GM12878 (cell line): ENCODE measurements at regions of chr17 and their contacts with region 1.

Region 1: GRCh38 chr17:36534840-36535668 is at the starts of genes MYO19 and PIGW:
- DNase-seq: peak; percentile 66
- ATAC-seq: peak; percentile 91
- H3K4me3 ChIP-seq: peak within 1 kb of the TSS; percentile 81
- H3K27ac ChIP-seq: peak within 1 kb of the TSS; percentile 98
- H3K4me1 ChIP-seq: peaks cover 9% of the 10 kb centered on the region
- H3K27me3 ChIP-seq: no peaks in the 10 kb centered on the region
- CTCF ChIP-seq: peak in 1 of 3 experiments; percentile 22; a peak in 3 of 6 replicates
- EP300 ChIP-seq: no peak
- POLR2A ChIP-seq: peak; percentile 94
- RAD21 ChIP-seq: no peak
- polyA plus RNA-seq, gene MYO19: 11.4 to 12.2 TPM
- polyA plus RNA-seq, gene PIGW: 6.0 to 9.5 TPM

Region 2: GRCh38 chr17:36486204-36487194 is 48.6 kb before region 1 on chr17 and contains the start of gene ZNHIT3:
- CTCF ChIA-PET with region 1: interaction called, 8 read pairs
- POLR2A ChIA-PET with region 1: interaction called, 6 read pairs
- RAD21 ChIA-PET with region 1: interaction called, 4 read pairs
- SMC1A ChIA-PET with region 1: no interaction called
- in situ Hi-C with region 1: no loop called
- intact Hi-C with region 1: loop called (anchors 2 kb)
- DNase-seq: peak; percentile 80
- ATAC-seq: peak; percentile 97
- H3K4me3 ChIP-seq: peak within 1 kb of the TSS; percentile 90
- H3K27ac ChIP-seq: peak within 1 kb of the TSS; percentile 71
- H3K4me1 ChIP-seq: peaks cover 9% of the 10 kb centered on the region
- H3K27me3 ChIP-seq: peaks cover 0 to 4% of the 10 kb centered on the region in 2 experiments; a peak in 1 of 4 replicates
- CTCF ChIP-seq: no peak
- EP300 ChIP-seq: no peak
- POLR2A ChIP-seq: peak; percentile 91
- RAD21 ChIP-seq: no peak
- polyA plus RNA-seq, gene ZNHIT3: 110 to 128 TPM

Region 3: DNA sequence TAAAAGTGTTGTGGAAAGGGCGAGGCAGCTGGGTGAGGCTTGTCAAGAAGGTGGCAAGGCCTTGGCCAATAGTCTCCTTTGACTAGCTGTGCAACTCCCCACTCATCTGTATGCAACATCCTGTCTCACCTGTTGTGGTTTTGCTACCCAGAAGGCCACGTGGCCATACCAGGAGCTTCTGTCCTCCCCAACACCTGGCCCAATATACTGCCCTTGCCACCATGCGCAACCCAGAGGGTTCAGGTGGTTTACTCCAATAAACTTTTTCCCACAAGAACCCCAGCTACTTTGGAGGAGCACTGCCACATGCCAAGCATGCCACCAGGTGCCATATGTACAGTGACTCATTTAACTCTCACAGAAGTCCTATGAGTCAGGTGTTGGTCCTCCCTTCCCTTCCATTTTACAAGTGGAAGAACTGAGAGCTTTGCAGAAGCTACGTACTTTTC is 10.6 kb before region 1 on chr17:
- CTCF ChIA-PET with region 1: interaction called, 15 read pairs
- POLR2A ChIA-PET with region 1: interaction called, 3 read pairs
- RAD21 ChIA-PET with region 1: no interaction called
- SMC1A ChIA-PET with region 1: interaction called, 5 read pairs
- in situ Hi-C with region 1: no loop called
- intact Hi-C with region 1: no loop called
- DNase-seq: no peak
- ATAC-seq: no peak
- H3K4me3 ChIP-seq: no peak overlapping the region
- H3K27ac ChIP-seq: peak overlapping the region; percentile 8; the same call in 1 of the 2 replicates
- H3K4me1 ChIP-seq: no peaks in the 10 kb centered on the region
- H3K27me3 ChIP-seq: no peaks in the 10 kb centered on the region
- CTCF ChIP-seq: no peak
- EP300 ChIP-seq: no peak
- POLR2A ChIP-seq: no peak
- RAD21 ChIP-seq: no peak

Region 4: DNA sequence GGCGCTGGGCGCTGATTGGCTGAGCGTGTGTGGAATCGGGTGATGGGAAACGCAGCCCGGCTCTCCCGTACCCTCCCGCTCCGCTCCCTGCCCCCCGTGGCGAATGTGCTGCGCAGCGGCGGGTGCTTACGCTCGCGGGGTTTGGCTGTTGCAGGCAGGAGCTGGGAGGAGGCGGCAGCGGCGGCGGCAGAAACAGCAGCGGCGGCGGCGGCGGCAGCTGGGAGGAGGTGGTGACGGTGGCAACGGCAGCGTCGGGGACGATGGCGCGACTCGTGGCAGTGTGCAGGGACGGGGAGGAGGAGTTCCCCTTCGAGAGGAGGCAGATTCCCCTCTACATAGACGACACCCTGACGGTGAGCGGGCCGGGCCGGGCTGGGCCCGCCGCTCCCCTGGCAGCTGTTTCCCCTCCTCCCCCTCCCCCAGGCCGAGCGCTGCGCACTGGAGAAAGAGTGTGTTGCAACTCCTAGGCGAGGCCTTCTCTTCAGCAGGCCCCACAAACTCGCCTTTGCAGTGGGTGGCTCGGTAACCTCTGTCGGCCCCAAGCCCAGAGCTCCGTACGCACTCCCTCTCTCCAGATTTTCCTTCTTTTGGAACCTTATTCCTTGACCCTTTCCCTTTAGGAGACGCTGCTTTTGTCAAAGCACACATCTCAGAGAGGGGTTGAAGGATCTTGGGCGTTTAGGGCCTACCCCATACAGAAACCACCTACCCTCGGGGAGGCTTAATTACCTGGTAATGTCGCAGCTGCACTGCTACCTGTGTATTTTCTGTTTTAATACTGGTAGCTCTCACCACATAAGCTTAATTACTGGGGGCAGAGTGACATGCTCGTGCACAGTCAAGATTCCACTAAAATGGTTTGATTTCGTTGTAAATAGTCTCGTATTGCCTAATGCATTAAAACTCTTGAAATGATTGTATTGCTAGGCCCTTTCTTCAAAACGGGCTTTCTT is 10.7 kb after region 1 on chr17:
- CTCF ChIA-PET with region 1: interaction called, 11 read pairs
- POLR2A ChIA-PET with region 1: interaction called, 18 read pairs
- RAD21 ChIA-PET with region 1: interaction called, 3 read pairs
- SMC1A ChIA-PET with region 1: interaction called, 3 read pairs
- in situ Hi-C with region 1: no loop called
- intact Hi-C with region 1: loop called (anchors 1 kb)
- DNase-seq: peak; percentile 82
- ATAC-seq: peak; percentile 85
- H3K4me3 ChIP-seq: peak overlapping the region; percentile 83
- H3K27ac ChIP-seq: peak overlapping the region; percentile 67
- H3K4me1 ChIP-seq: peaks cover 12% of the 10 kb centered on the region; the same call in 1 of the 2 replicates
- H3K27me3 ChIP-seq: no peaks in the 10 kb centered on the region
- CTCF ChIP-seq: peak in 1 of 3 experiments; percentile 1; a peak in 1 of 6 replicates
- EP300 ChIP-seq: peak in 1 of 2 experiments; percentile 99; a peak in 2 of 4 replicates
- POLR2A ChIP-seq: peak; percentile 79
- RAD21 ChIP-seq: no peak

Region 5: GRCh38 chr17:36550491-36551417 is 15.7 kb after region 1 on chr17:
- CTCF ChIA-PET with region 1: interaction called, 11 read pairs
- POLR2A ChIA-PET with region 1: interaction called, 18 read pairs
- RAD21 ChIA-PET with region 1: interaction called, 3 read pairs
- SMC1A ChIA-PET with region 1: interaction called, 3 read pairs
- in situ Hi-C with region 1: no loop called
- intact Hi-C with region 1: no loop called
- DNase-seq: peak; percentile 61
- ATAC-seq: peak; percentile 73
- H3K4me3 ChIP-seq: peak overlapping the region; percentile 4; the same call in 1 of the 2 replicates
- H3K27ac ChIP-seq: no peak overlapping the region; the same call in 1 of the 2 replicates
- H3K4me1 ChIP-seq: peaks cover 18% of the 10 kb centered on the region
- H3K27me3 ChIP-seq: no peaks in the 10 kb centered on the region
- CTCF ChIP-seq: no peak
- EP300 ChIP-seq: no peak
- POLR2A ChIP-seq: no peak
- RAD21 ChIP-seq: no peak

Region 6: GRCh38 chr17:36576793-36577192 is 41.7 kb after region 1 on chr17:
- CTCF ChIA-PET with region 1: no interaction called
- POLR2A ChIA-PET with region 1: no interaction called
- RAD21 ChIA-PET with region 1: no interaction called
- SMC1A ChIA-PET with region 1: no interaction called
- in situ Hi-C with region 1: no loop called
- intact Hi-C with region 1: no loop called
- DNase-seq: no peak
- ATAC-seq: no peak
- H3K4me3 ChIP-seq: no peak overlapping the region
- H3K27ac ChIP-seq: no peak overlapping the region
- H3K4me1 ChIP-seq: no peaks in the 10 kb centered on the region
- H3K27me3 ChIP-seq: no peaks in the 10 kb centered on the region
- CTCF ChIP-seq: no peak
- EP300 ChIP-seq: no peak
- POLR2A ChIP-seq: no peak
- RAD21 ChIP-seq: no peak